Activated B cell treated with CpG ODN at 0.5 μM for 24 hours (primary cell): ENCODE measurements at regions of chr3 and their contacts with region 1.

Region 1: GRCh38 chr3:112642912-112643506 is 2.1 kb upstream of the CCDC80 start:
- DNase-seq: peak; percentile 51
- ATAC-seq: peak; percentile 100
- H3K4me3 Mint-ChIP-seq: peak overlapping the region; percentile 69
- H3K27ac Mint-ChIP-seq: no peak overlapping the region
- H3K4me1 Mint-ChIP-seq: peaks cover 11% of the 10 kb centered on the region
- H3K27me3 Mint-ChIP-seq: peaks cover 4% of the 10 kb centered on the region
- CTCF ChIP-seq: peak; percentile 36

Region 2: GRCh38 chr3:112582244-112582874 is 60.6 kb before region 1 on chr3:
- CTCF ChIA-PET with region 1: interaction called, 20 read pairs
- POLR2A ChIA-PET with region 1: no interaction called
- intact Hi-C with region 1: loop called (anchors 1 kb)
- DNase-seq: no peak
- ATAC-seq: no peak
- H3K4me3 Mint-ChIP-seq: no peak overlapping the region
- H3K27ac Mint-ChIP-seq: no peak overlapping the region
- H3K4me1 Mint-ChIP-seq: peaks cover 42% of the 10 kb centered on the region
- H3K27me3 Mint-ChIP-seq: no peaks in the 10 kb centered on the region
- CTCF ChIP-seq: peak; percentile 59

Region 3: DNA sequence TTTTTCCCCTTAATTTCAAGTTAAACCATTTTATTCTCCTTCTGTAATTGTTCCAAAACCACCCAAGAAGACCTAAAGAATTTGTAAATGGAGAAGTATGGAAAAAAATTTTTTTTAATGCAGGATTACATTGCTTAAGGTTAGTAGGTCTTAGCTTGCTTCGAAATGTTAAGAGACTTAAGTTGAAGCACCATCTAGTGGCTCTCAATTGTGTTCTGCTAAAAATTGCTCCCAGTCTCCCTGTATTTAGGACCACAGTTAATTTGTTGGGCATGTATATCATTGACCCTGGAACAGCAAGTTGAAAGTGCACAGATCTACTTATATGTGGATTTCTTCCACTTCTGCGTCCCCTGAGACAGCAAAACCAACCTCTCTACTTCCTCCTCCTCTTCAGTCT is 171.3 kb after region 1 on chr3:
- CTCF ChIA-PET with region 1: interaction called, 9 read pairs
- POLR2A ChIA-PET with region 1: no interaction called
- intact Hi-C with region 1: loop called (anchors 1 kb)
- DNase-seq: no peak
- ATAC-seq: peak; percentile 26
- H3K4me3 Mint-ChIP-seq: peak overlapping the region; percentile 58
- H3K27ac Mint-ChIP-seq: peak overlapping the region; percentile 79
- H3K4me1 Mint-ChIP-seq: peaks cover 48% of the 10 kb centered on the region
- H3K27me3 Mint-ChIP-seq: no peaks in the 10 kb centered on the region
- CTCF ChIP-seq: no peak

Region 4: DNA sequence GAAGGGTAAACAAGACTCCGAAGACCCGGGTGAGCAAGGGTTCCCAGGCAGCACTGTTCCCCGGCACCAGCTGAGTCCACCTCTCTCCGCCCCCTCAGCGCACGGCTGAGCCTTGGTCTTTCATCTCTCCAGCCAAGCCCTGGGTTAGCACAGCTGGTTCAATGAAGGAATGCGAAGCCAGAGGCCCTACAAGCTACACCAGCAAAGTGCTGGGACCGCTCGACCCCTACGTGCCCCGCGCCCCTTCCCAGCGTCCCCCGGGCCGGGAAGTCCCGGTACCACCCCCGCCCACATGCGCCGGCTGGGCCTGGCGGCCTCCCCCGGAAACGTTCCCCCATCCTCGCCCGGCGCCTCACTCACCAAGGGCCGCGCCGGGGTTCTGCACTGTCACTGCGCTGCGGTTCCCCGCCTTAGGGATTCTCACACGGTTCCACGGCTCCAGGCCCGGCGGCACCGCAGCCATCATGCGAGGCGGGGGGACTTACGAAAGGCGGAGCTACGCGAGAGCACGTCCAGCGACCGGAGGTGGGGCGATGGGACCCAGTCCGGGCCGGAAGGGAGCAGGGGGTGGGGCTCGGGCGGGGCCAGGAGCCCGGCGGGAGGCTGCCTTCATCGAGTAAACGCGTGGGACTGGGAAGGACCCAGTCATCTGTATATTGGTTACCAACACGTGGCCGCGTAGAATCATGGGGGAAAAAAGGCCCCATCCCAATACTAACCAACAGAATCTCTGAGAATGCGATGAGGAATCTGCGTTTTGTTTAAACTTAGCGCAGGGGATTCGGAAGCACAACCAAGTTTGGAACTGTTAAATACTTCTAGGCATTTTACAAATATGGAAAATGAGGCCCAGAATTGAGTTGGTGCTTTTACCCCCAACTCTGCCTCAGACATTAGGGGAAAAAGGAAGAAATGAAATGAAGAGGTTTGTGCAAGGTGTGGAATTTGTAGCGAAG is 376.5 kb after region 1 on chr3:
- CTCF ChIA-PET with region 1: no interaction called
- POLR2A ChIA-PET with region 1: interaction called, 7 read pairs
- intact Hi-C with region 1: loop called (anchors 1 kb)
- DNase-seq: peak; percentile 81
- ATAC-seq: peak; percentile 87
- H3K4me3 Mint-ChIP-seq: peak overlapping the region; percentile 92
- H3K27ac Mint-ChIP-seq: peak overlapping the region; percentile 95
- H3K4me1 Mint-ChIP-seq: peaks cover 54% of the 10 kb centered on the region
- H3K27me3 Mint-ChIP-seq: no peaks in the 10 kb centered on the region
- CTCF ChIP-seq: no peak

Region 5: DNA sequence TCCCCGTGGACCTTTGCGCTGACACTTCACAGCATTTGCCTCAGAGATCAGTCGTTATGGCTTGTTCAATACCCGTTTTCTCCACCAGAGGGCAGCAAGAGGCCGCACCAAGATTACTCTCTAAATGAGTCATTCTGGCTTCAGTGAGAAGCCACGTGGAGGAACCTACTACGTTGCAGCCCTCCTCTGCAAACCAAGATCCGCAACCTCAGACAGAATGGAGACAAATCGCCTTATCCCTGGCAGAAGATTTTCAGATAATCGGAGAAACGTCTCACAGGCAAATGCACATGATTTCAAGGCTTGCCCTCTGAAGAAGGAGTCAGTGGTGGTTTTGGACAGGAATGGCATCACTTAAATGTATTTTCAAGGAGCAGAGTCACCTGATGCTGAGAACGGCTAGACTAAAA is 408.3 kb after region 1 on chr3:
- CTCF ChIA-PET with region 1: no interaction called
- POLR2A ChIA-PET with region 1: no interaction called
- intact Hi-C with region 1: loop called (anchors 1 kb)
- DNase-seq: peak; percentile 68
- ATAC-seq: peak; percentile 99
- H3K4me3 Mint-ChIP-seq: no peak overlapping the region
- H3K27ac Mint-ChIP-seq: no peak overlapping the region
- H3K4me1 Mint-ChIP-seq: peaks cover 3% of the 10 kb centered on the region
- H3K27me3 Mint-ChIP-seq: no peaks in the 10 kb centered on the region
- CTCF ChIP-seq: no peak

Region 6: DNA sequence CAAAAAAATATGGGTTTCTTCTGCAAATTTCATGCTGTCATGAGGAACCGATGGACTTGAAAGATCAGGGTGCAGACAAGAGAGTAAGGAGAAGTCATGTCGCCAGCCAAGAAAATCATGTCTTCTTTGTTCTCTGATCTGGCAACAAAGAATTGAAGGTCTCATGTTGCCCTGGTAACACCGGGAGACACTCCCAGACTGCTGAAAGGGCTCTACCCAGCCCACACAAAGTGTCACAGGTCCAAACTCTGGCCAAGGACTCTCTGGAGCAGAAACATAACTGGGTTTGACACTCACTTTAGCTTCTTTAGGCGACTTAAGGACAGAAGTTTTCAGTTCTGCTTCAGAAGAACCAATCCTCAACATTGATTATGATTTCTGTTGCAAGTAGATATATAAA is 932.2 kb after region 1 on chr3:
- CTCF ChIA-PET with region 1: interaction called, 5 read pairs
- POLR2A ChIA-PET with region 1: no interaction called
- intact Hi-C with region 1: loop called (anchors 2 kb)
- DNase-seq: no peak
- ATAC-seq: no peak
- H3K4me3 Mint-ChIP-seq: no peak overlapping the region
- H3K27ac Mint-ChIP-seq: peak overlapping the region; percentile 31
- H3K4me1 Mint-ChIP-seq: peaks cover 5% of the 10 kb centered on the region
- H3K27me3 Mint-ChIP-seq: no peaks in the 10 kb centered on the region
- CTCF ChIP-seq: no peak